ENCODE measurements at regions of chr21 and their contacts with region 1.

Region 1: GRCh38 chr21:41879190-41879998 is at the start of gene PRDM15:
- DNase-seq: peak; percentile 78 to 91 (median 88)
- H3K4me3 ChIP-seq: peak within 1 kb of the TSS; percentile 56 to 86 (median 82)
- H3K27ac ChIP-seq: peak within 1 kb of the TSS; percentile 82 to 92
- H3K4me1 ChIP-seq: peaks cover 15 to 40% (median 21%) of the 10 kb centered on the region in 4 experiments
- H3K27me3 ChIP-seq: no peaks in the 10 kb centered on the region

Region 2: GRCh38 chr21:41695513-41695912 is 183.9 kb before region 1 on chr21:
- CTCF ChIA-PET with region 1: no interaction called
- POLR2A ChIA-PET with region 1: no interaction called
- DNase-seq: no peak
- H3K4me3 ChIP-seq: no peak overlapping the region
- H3K27ac ChIP-seq: no peak overlapping the region
- H3K4me1 ChIP-seq: peaks cover 0 to 5% (median 0%) of the 10 kb centered on the region in 4 experiments
- H3K27me3 ChIP-seq: peaks cover 0 to 11% (median 2%) of the 10 kb centered on the region in 5 experiments

Region 3: DNA sequence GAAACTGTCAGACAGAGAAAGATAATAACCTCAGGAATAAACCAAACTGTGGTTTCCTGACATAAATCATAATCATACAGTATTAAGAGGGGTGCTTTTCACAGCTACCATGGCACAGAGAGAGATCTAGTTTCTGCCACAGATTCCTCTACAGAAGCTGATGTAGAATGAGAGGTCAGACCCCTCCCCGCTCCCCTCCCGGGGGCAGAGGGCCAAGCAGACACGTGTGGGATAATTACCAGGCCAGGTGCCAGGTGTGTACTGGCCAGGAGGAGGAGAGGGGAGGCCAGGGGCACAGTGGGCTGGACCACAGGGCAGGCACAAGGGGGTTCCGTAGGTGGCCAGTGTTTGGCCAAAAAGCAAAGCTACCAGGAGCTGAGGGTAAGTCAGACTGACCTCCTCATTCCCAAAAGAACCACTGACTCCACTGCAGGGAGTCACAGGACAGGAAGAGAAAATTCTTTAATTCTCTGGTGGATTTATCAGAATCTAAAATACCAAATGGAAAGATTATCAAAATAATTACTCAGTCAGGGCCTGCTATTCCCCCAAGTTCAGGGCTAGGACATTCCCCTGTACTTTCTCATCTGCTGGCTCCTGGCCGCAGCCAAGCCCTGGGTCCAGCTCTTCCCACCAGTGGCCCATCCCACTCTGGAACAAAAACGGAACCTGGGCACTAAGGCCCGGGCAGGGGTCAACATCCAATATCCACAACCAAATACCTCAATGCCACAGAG is 44.4 kb after region 1 on chr21:
- CTCF ChIA-PET with region 1: interaction called, 8 read pairs
- POLR2A ChIA-PET with region 1: interaction called, 12 read pairs
- DNase-seq: peak; percentile 59 to 92 (median 88)
- H3K4me3 ChIP-seq: peak overlapping the region in 4 of 7 experiments; percentile 16 to 57 (median 43)
- H3K27ac ChIP-seq: peak overlapping the region; percentile 30 to 37
- H3K4me1 ChIP-seq: peaks cover 31 to 89% (median 86%) of the 10 kb centered on the region in 4 experiments
- H3K27me3 ChIP-seq: no peaks in the 10 kb centered on the region

Measured in common myeloid progenitor, CD34-positive (primary cell).